Colonic mucosa (tissue), 4 donors: ENCODE measurements at regions of chr22 and their contacts with region 1.

Region 1: DNA sequence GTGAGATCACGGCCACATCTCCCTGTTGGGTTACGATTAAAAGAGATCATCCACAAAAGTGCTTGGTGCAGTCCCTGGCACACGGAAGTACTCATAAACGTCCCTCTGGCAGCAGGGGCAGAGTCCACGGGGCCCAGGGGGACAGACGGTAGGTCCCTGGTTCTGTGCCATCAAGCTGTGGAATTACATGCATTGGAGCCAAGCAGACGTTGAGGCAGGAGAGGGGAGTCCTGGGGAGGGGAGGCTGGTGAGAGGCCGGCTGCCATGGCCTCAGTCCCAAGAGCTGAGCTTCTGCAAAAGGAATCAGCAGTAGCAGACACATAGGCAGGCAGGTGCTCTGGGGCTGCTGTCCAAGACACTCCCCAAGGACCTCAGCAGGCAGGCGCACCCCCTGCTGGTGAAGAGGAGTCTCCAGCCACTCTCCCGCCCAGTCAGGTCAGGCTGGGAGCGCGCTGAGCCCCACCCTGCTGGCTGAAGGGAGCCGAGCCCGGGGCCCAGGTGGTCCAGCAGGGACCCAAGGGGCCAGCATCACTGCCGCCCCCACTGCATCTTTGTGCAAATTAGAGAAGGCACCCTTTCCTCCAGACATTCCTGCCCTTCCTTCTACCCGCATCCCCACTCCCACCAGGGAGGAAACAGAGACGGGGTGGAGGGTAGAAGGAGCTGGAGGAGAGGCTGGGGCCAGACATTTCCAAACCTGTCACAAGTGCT is 7.6 kb upstream of the KCTD17 start:
- DNase-seq: peak; percentile 90
- H3K4me3 ChIP-seq: no peak overlapping the region
- H3K27ac ChIP-seq: peak overlapping the region; percentile 91
- H3K4me1 ChIP-seq: peaks cover 7% of the 10 kb centered on the region
- H3K27me3 ChIP-seq: no peaks in the 10 kb centered on the region
- CTCF ChIP-seq: peak; percentile 78

Region 2: GRCh38 chr22:36986242-36986821 is 57.7 kb before region 1 on chr22:
- intact Hi-C with region 1: loop called (anchors 10 kb)
- DNase-seq: peak; percentile 78
- H3K4me3 ChIP-seq: no peak overlapping the region
- H3K27ac ChIP-seq: no peak overlapping the region
- H3K4me1 ChIP-seq: no peaks in the 10 kb centered on the region
- H3K27me3 ChIP-seq: peaks cover 3% of the 10 kb centered on the region
- CTCF ChIP-seq: peak; percentile 71

Region 3: DNA sequence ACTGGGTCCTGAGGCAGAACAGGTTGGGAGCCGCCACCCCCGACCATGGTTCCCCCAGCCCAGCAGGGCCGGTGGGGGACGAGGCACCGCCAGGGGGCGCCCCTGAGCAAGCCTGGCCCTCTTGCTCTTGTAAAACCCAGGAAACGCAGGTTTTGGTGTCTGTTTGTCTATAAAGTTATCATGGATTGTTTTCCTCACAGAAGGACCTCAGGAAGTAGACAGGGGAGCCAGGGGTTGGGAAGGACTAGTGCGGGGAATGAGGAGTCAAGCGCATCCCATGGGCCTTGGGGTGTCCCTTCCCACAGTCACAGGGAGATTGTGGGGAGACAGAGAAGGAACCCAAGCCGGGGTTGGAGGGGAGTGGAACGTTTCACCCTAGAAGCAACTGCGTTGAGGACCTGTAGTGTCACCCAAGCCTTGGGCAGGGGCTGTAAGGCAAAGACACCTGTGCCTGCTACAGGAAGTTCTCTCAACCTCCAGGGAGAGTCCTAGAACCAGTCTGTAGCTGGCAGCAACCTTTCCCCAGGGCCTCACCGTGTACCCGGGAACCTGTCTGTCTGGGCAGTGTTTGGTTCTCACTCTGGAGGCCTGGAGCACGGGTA is 34.0 kb after region 1 on chr22:
- intact Hi-C with region 1: no loop called
- DNase-seq: peak; percentile 73
- H3K4me3 ChIP-seq: no peak overlapping the region
- H3K27ac ChIP-seq: no peak overlapping the region
- H3K4me1 ChIP-seq: no peaks in the 10 kb centered on the region
- H3K27me3 ChIP-seq: no peaks in the 10 kb centered on the region
- CTCF ChIP-seq: peak; percentile 98

Region 4: GRCh38 chr22:37370306-37370979 is 326.5 kb after region 1 on chr22:
- intact Hi-C with region 1: no loop called
- DNase-seq: peak; percentile 25
- H3K4me3 ChIP-seq: no peak overlapping the region
- H3K27ac ChIP-seq: no peak overlapping the region
- H3K4me1 ChIP-seq: no peaks in the 10 kb centered on the region
- H3K27me3 ChIP-seq: no peaks in the 10 kb centered on the region
- CTCF ChIP-seq: no peak